Natural killer cell (primary cell): ENCODE measurements at regions of chr12 and their contacts with region 1.

Region 1: DNA sequence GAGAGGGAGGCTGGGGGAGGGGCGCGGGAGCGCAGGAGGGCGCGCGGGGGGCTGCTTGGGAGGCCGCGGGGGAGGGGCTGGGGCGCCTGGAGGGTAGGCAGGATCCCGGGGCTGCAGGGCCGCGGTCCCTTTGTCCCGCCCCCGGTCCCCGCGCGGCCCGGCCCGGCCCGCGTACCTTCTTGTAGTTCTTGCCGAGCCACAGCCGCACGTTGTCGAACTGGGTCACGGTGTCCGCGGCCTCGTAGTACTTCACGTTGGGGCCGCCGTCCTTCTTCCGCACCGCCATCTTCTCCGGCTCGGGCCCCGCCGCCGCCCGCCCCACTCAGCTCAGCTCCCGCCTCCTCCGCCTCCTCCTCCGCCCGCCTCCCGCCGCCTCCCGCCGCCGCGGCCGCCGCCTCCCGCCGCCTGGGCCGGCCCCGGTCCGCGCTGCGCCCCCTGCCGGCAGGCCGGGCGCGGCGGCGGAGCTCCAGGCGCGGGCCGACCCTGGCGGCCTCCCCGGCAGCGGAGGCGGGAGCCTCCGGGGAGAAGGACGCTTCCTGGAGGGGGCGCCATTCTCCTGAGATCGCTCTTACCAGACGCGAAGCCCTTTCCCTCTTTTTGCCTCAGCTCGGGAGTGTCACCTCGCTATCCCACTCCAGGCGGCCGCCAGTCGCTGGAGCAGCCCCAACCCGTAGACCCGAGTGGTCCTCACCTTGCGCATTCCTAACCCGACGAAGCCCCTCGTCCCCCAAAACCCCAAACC is at the start of gene SMARCC2:
- DNase-seq: peak; percentile 83 to 94
- ATAC-seq: peak; percentile 81 to 94 (median 83)
- H3K4me3 ChIP-seq: peak within 1 kb of the TSS; percentile 96
- H3K4me3 Mint-ChIP-seq: peak within 1 kb of the TSS; percentile 99
- H3K27ac ChIP-seq: peak within 1 kb of the TSS; percentile 96
- H3K27ac Mint-ChIP-seq: peak within 1 kb of the TSS; percentile 98
- H3K4me1 ChIP-seq: peaks cover 27% of the 10 kb centered on the region
- H3K4me1 Mint-ChIP-seq: peaks cover 43 to 55% of the 10 kb centered on the region in 2 donors
- H3K27me3 ChIP-seq: no peaks in the 10 kb centered on the region
- H3K27me3 Mint-ChIP-seq: no peaks in the 10 kb centered on the region
- CTCF ChIP-seq: peak; percentile 66
- total RNA-seq, gene SMARCC2: 205 to 232 (median 210) TPM

Region 2: GRCh38 chr12:55885113-55885512 is 304.2 kb before region 1 on chr12:
- intact Hi-C with region 1: no loop called
- DNase-seq: no peak
- ATAC-seq: no peak
- H3K4me3 ChIP-seq: no peak overlapping the region
- H3K4me3 Mint-ChIP-seq: no peak overlapping the region
- H3K27ac ChIP-seq: no peak overlapping the region
- H3K27ac Mint-ChIP-seq: no peak overlapping the region
- H3K4me1 ChIP-seq: no peaks in the 10 kb centered on the region
- H3K4me1 Mint-ChIP-seq: no peaks in the 10 kb centered on the region
- H3K27me3 ChIP-seq: no peaks in the 10 kb centered on the region
- H3K27me3 Mint-ChIP-seq: no peaks in the 10 kb centered on the region
- CTCF ChIP-seq: no peak

Region 3: GRCh38 chr12:56127888-56128669 is 61.3 kb before region 1 on chr12 and contains the start of gene ESYT1:
- intact Hi-C with region 1: loop called (anchors 1 kb)
- DNase-seq: peak; percentile 91 to 100
- ATAC-seq: peak; percentile 87 to 96 (median 90)
- H3K4me3 ChIP-seq: peak within 1 kb of the TSS; percentile 90
- H3K4me3 Mint-ChIP-seq: peak within 1 kb of the TSS; percentile 97
- H3K27ac ChIP-seq: peak within 1 kb of the TSS; percentile 85
- H3K27ac Mint-ChIP-seq: peak within 1 kb of the TSS; percentile 88 to 93
- H3K4me1 ChIP-seq: peaks cover 45% of the 10 kb centered on the region
- H3K4me1 Mint-ChIP-seq: peaks cover 52 to 68% of the 10 kb centered on the region in 2 donors
- H3K27me3 ChIP-seq: no peaks in the 10 kb centered on the region
- H3K27me3 Mint-ChIP-seq: no peaks in the 10 kb centered on the region
- CTCF ChIP-seq: no peak
- total RNA-seq, gene ESYT1: 198 to 215 (median 199) TPM

Region 4: DNA sequence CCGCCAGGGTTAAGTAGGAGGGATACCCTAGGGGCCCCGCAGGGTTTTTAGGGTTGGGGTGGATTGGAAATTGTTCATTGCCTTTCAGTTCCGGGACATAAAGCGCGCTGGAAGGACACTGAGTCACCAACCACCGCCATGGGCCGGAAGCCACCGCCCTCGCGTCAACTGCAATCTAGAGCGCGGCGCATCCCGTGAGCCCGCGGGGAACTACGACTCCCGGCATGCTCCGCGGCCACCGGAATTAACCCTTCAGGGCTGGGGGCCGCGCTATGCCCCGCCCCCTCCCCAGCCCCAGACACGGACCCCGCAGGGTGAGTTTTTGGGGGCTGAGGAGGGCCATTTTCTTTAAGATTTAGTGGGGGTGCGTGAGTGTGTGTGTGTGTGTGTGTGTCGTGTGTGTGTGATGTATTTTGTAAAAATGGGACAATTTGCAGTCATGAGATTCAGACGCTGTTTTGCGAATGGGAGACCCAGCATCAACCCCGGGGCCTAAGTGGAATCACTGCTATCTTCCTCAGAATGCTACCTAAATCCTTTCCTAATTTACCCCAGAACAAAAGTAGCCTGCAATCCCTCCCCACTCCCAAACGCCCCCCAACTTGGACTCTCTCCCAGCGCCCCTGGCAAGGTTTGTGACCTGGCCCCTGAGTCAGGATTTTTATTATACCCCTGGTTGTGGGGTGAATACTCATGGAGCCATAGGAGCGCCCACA is 36.9 kb before region 1 on chr12 and contains the start of gene MYL6B:
- intact Hi-C with region 1: loop called (anchors 2 kb)
- DNase-seq: peak; percentile 90 to 96
- ATAC-seq: peak; percentile 93 to 98 (median 97)
- H3K4me3 ChIP-seq: peak within 1 kb of the TSS; percentile 68
- H3K4me3 Mint-ChIP-seq: peak within 1 kb of the TSS; percentile 84
- H3K27ac ChIP-seq: peak within 1 kb of the TSS; percentile 90
- H3K27ac Mint-ChIP-seq: peak within 1 kb of the TSS; percentile 94 to 99
- H3K4me1 ChIP-seq: peaks cover 25% of the 10 kb centered on the region
- H3K4me1 Mint-ChIP-seq: peaks cover 14 to 35% of the 10 kb centered on the region in 2 donors
- H3K27me3 ChIP-seq: no peaks in the 10 kb centered on the region
- H3K27me3 Mint-ChIP-seq: no peaks in the 10 kb centered on the region
- CTCF ChIP-seq: no peak
- total RNA-seq, gene MYL6B: 6.7 to 8.9 (median 7.4) TPM

Region 5: DNA sequence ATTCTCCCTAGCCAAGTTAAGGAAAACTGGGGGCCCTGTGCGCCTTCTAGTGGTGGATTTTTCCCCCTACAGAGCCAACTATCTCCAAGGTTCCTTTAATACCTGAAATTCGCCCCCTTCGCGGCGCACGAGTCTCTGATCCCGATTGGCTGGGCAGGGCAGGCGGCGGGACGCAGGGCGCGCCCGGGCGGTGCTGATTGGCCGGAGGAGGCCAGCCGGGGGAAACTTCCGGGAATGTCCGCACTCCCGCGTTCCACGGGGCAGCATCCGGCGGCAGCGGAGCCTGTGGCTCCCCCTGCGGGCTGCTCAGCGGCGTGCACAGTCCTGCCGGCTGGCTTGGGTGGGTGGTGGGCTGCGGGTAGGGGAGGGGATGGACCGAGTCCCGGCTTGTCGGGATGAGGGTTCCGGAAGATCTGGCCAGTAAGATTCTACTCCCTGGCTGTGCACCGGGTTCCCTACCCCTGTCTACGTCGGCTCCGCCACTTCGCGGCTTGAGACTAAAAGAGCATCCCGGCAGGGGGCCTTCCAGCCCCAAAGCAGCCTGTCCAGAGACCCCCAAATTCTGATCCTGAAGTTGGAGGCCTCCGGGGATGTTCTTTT is 34.9 kb after region 1 on chr12 and contains the start of gene NABP2:
- intact Hi-C with region 1: loop called (anchors 1 kb)
- DNase-seq: peak; percentile 85 to 96
- ATAC-seq: peak; percentile 70 to 86 (median 79)
- H3K4me3 ChIP-seq: peak within 1 kb of the TSS; percentile 56
- H3K4me3 Mint-ChIP-seq: peak within 1 kb of the TSS; percentile 92
- H3K27ac ChIP-seq: peak within 1 kb of the TSS; percentile 70
- H3K27ac Mint-ChIP-seq: peak within 1 kb of the TSS; percentile 100
- H3K4me1 ChIP-seq: peaks cover 47% of the 10 kb centered on the region
- H3K4me1 Mint-ChIP-seq: peaks cover 48 to 53% of the 10 kb centered on the region in 2 donors
- H3K27me3 ChIP-seq: no peaks in the 10 kb centered on the region
- H3K27me3 Mint-ChIP-seq: no peaks in the 10 kb centered on the region
- CTCF ChIP-seq: peak; percentile 91
- total RNA-seq, gene NABP2: 21.6 to 23.4 (median 22.6) TPM

Region 6: GRCh38 chr12:56258057-56258819 is 68.9 kb after region 1 on chr12 and contains the start of gene ANKRD52:
- intact Hi-C with region 1: loop called (anchors 2 kb)
- DNase-seq: peak; percentile 84 to 93
- ATAC-seq: peak; percentile 97 to 98 (median 97)
- H3K4me3 ChIP-seq: peak within 1 kb of the TSS; percentile 75
- H3K4me3 Mint-ChIP-seq: peak within 1 kb of the TSS; percentile 94
- H3K27ac ChIP-seq: peak within 1 kb of the TSS; percentile 63
- H3K27ac Mint-ChIP-seq: peak within 1 kb of the TSS; percentile 80 to 88
- H3K4me1 ChIP-seq: peaks cover 24% of the 10 kb centered on the region
- H3K4me1 Mint-ChIP-seq: peaks cover 8 to 26% of the 10 kb centered on the region in 2 donors
- H3K27me3 ChIP-seq: no peaks in the 10 kb centered on the region
- H3K27me3 Mint-ChIP-seq: no peaks in the 10 kb centered on the region
- CTCF ChIP-seq: peak; percentile 82
- total RNA-seq, gene ANKRD52: 34.1 to 52.2 (median 51.4) TPM

Region 7: DNA sequence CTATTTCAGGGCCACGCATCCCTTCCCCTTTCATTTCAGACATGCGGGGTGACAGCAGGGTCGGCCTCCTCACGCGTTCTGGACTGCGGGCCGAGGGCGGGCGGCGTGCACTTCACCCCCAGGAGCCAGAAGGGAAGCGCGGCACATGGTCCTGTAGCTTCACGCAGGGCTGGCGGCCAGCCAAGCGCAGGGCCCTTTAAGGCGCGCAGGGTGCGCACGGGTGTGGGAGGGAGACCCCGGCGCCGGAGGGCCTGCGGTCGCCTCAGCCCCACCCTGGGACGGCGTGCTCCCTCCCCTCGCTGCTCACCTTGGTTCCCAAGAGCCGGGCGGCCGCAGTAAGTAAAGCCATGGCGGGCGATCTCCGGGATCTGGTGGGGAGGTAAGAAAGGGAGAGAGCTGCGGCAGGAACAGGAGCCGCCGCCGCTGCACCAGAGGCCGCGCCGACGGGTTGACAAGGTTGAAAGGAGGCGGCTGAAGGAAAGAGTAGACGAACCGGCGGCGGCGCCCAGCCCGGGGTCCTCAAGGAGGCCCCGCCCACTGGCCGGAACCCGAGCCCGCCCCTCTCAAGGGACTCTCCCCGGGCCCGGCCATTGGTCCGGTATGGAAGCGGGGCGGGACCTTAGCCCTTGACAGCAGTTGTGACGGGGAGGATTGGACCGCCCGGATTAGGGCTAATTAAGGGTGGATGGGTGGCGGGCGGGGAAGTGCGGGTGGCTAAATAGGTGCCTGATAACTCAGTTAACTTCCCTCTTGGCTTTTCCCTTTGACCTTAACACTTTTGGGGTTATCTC is 110.7 kb after region 1 on chr12 and contains the start of gene CS:
- intact Hi-C with region 1: loop called (anchors 2 kb)
- DNase-seq: peak; percentile 98 to 99
- ATAC-seq: peak; percentile 95 to 99 (median 96)
- H3K4me3 ChIP-seq: peak within 1 kb of the TSS; percentile 72
- H3K4me3 Mint-ChIP-seq: peak within 1 kb of the TSS; percentile 93
- H3K27ac ChIP-seq: peak within 1 kb of the TSS; percentile 88
- H3K27ac Mint-ChIP-seq: peak within 1 kb of the TSS; percentile 97 to 98
- H3K4me1 ChIP-seq: peaks cover 34% of the 10 kb centered on the region
- H3K4me1 Mint-ChIP-seq: peaks cover 55 to 56% of the 10 kb centered on the region in 2 donors
- H3K27me3 ChIP-seq: no peaks in the 10 kb centered on the region
- H3K27me3 Mint-ChIP-seq: no peaks in the 10 kb centered on the region
- CTCF ChIP-seq: no peak
- total RNA-seq, gene CS: 185 to 190 (median 188) TPM

Region 8: GRCh38 chr12:56468216-56469006 is 279.1 kb after region 1 on chr12 and contains the start of gene SPRYD4:
- intact Hi-C with region 1: loop called (anchors 1 kb)
- DNase-seq: peak; percentile 93 to 97
- ATAC-seq: peak; percentile 91 to 98 (median 97)
- H3K4me3 ChIP-seq: peak within 1 kb of the TSS; percentile 80
- H3K4me3 Mint-ChIP-seq: peak within 1 kb of the TSS; percentile 95
- H3K27ac ChIP-seq: peak within 1 kb of the TSS; percentile 92
- H3K27ac Mint-ChIP-seq: peak within 1 kb of the TSS; percentile 94
- H3K4me1 ChIP-seq: peaks cover 20% of the 10 kb centered on the region
- H3K4me1 Mint-ChIP-seq: peaks cover 22 to 25% of the 10 kb centered on the region in 2 donors
- H3K27me3 ChIP-seq: no peaks in the 10 kb centered on the region
- H3K27me3 Mint-ChIP-seq: no peaks in the 10 kb centered on the region
- CTCF ChIP-seq: no peak
- total RNA-seq, gene SPRYD4: 5.6 to 6.2 (median 5.6) TPM